Transverse colon (tissue), 4 donors: ENCODE measurements at regions of chr22 and their contacts with region 1.

Region 1: DNA sequence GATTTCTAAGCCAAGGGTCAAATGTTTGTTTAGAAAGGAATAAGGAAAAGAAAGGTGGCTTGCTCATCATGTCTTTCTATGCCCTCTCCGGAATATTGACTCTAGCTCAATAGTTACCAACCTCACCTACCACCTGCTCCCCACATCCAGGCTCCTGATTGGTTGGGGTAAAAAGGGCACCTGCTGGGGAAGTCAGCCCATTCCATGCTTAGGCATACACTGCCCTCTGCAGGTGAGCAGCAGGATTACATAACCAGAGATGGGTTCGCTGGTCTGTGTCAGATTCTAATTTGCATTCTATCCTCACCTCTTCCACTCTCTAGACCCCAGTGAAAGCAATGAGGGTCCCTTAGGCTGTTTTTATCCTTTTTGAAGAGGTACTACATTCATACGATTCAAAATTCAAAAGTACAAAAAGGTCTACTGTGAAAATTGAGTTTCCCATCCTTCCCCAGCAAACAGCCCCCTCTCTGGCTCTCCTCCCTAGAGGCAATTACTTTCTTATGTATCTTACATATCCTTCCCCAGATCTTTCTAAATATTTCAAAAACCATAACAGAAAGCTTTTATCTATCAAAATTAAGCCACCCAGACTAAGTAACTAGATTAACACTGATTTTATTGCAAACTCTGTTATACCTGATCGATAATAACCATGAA is 98.0 kb upstream of the ASPHD2 start:
- DNase-seq: peak; percentile 64
- H3K4me3 ChIP-seq: no peak overlapping the region
- H3K27ac ChIP-seq: no peak overlapping the region
- H3K4me1 ChIP-seq: no peaks in the 10 kb centered on the region
- H3K27me3 ChIP-seq: peaks cover 13% of the 10 kb centered on the region
- CTCF ChIP-seq: peak; percentile 78 to 84 (median 79)
- EP300 ChIP-seq: no peak
- POLR2A ChIP-seq: no peak

Region 2: GRCh38 chr22:25452116-25452700 is 878.9 kb before region 1 on chr22:
- in situ Hi-C with region 1: loop called in 3 of 4 experiments (anchors 25 kb)
- intact Hi-C with region 1: no loop called
- DNase-seq: no peak
- H3K4me3 ChIP-seq: no peak overlapping the region
- H3K27ac ChIP-seq: no peak overlapping the region
- H3K4me1 ChIP-seq: peaks cover 6 to 37% (median 12%) of the 10 kb centered on the region in 4 donors
- H3K27me3 ChIP-seq: no peaks in the 10 kb centered on the region
- CTCF ChIP-seq: no peak
- EP300 ChIP-seq: no peak
- POLR2A ChIP-seq: no peak

Region 3: GRCh38 chr22:25777870-25778269 is 553.2 kb before region 1 on chr22:
- in situ Hi-C with region 1: loop called in 2 of 4 experiments (anchors 25 kb)
- intact Hi-C with region 1: no loop called
- DNase-seq: no peak
- H3K4me3 ChIP-seq: no peak overlapping the region
- H3K27ac ChIP-seq: no peak overlapping the region
- H3K4me1 ChIP-seq: no peaks in the 10 kb centered on the region
- H3K27me3 ChIP-seq: no peaks in the 10 kb centered on the region
- CTCF ChIP-seq: peak in 2 of 5 experiments; percentile 13 to 30
- EP300 ChIP-seq: no peak
- POLR2A ChIP-seq: no peak

Region 4: GRCh38 chr22:25853501-25854284 is 477.4 kb before region 1 on chr22:
- in situ Hi-C with region 1: loop called in 1 of 4 experiments (anchors 25 kb)
- intact Hi-C with region 1: no loop called
- DNase-seq: no peak
- H3K4me3 ChIP-seq: no peak overlapping the region
- H3K27ac ChIP-seq: no peak overlapping the region
- H3K4me1 ChIP-seq: no peaks in the 10 kb centered on the region
- H3K27me3 ChIP-seq: no peaks in the 10 kb centered on the region
- CTCF ChIP-seq: no peak
- EP300 ChIP-seq: no peak
- POLR2A ChIP-seq: no peak

Region 5: DNA sequence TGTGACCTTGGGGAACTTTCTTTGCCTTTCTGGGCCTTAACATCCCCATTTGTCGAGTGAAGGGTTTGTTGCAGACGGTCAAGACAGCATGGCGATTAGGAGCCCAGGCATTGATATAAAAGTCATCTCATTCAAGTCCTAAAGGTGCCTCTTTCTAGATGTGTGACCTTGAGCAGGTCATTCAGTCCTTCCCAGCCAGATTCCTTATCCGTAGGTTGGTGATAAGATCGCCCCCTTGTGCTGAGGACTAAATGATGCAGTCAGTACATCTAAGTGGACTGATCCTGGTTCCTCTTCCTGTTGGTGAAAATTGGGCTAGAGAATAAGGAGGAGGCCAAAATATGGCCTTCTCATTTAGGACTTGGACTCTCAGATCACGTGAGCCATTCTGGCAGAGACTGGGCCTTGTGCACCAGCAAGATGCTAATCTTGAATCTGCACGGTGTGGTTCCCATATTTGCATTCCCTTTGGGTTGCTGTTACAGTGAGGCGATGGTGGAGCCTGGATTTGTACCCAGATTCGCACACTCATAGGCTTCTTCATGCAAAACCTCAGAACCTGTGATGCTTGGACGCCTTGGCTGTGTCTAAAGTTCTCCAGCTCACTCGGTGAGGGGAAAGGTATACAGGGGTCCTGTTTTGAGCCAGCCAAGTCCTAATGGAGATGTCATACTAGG is 432.3 kb before region 1 on chr22:
- in situ Hi-C with region 1: loop called in 1 of 4 experiments (anchors 25 kb)
- intact Hi-C with region 1: no loop called
- DNase-seq: no peak
- H3K4me3 ChIP-seq: no peak overlapping the region
- H3K27ac ChIP-seq: no peak overlapping the region
- H3K4me1 ChIP-seq: no peaks in the 10 kb centered on the region
- H3K27me3 ChIP-seq: peaks cover 5% of the 10 kb centered on the region
- CTCF ChIP-seq: no peak
- EP300 ChIP-seq: no peak
- POLR2A ChIP-seq: no peak

Region 6: DNA sequence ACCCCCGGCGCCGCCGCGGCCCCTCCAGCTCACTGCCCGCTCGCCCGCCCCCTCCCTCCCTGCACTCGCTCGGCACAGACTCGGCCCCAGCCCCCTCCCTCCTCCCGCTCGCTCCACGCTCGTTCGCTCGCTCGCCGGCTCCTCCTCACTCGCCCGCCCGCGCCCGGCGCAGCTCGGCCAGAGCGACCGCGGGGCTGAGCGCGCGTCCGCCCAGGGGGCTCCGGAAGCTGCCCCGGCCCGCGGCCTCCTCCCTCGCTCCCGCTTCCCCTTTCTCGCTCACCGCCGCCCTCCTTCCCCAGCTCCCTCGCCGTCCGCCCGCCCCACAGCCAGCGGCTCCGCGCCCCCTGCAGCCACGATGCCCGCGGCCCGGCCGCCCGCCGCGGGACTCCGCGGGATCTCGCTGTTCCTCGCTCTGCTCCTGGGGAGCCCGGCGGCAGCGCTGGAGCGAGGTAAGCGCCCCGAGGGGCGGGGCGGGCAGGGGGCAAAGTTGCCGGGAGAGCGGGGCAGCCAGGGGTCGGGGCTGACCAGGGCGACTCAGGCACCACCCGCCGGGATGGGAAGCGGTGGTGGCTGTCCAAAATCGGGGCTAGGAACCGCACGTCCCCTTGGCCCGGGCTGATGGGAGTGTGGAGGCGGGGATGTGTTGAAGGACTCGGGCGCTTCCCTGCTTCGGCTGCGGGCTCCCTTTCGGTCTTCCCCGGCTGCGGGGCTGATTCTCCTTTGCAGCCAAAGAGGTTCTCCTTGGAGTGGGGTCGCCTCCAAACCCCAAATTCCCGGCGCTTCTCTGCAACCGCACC is 161.6 kb before region 1 on chr22 and contains the start of gene SEZ6L:
- in situ Hi-C with region 1: no loop called
- intact Hi-C with region 1: no loop called
- DNase-seq: no peak
- H3K4me3 ChIP-seq: peak within 1 kb of the TSS in 3 of 4 donors; percentile 19 to 45 (median 32)
- H3K27ac ChIP-seq: no peak within 1 kb of the TSS
- H3K4me1 ChIP-seq: peaks cover 3 to 14% (median 7%) of the 10 kb centered on the region in 4 donors
- H3K27me3 ChIP-seq: peaks cover 97% of the 10 kb centered on the region
- CTCF ChIP-seq: no peak
- EP300 ChIP-seq: no peak
- POLR2A ChIP-seq: no peak
- total RNA-seq, gene SEZ6L: 0.14 to 0.16 TPM in 2 of 4 donors, not detected in the others